ENCODE measurements at regions of chr6 and their contacts with region 1.

Region 1: GRCh38 chr6:37783856-37784584 is 35.5 kb upstream of the ZFAND3 start:
- DNase-seq: peak in 1 of 2 donors; percentile 58
- H3K4me3 ChIP-seq: peak overlapping the region; percentile 45 to 60
- H3K27ac ChIP-seq: peak overlapping the region; percentile 5 to 6
- H3K4me1 ChIP-seq: peaks cover 0 to 18% (median 17%) of the 10 kb centered on the region in 4 donors
- H3K27me3 ChIP-seq: no peaks in the 10 kb centered on the region
- CTCF ChIP-seq: no peak

Region 2: GRCh38 chr6:37602346-37602745 is 181.7 kb before region 1 on chr6:
- intact Hi-C with region 1: no loop called
- DNase-seq: no peak
- H3K4me3 ChIP-seq: no peak overlapping the region
- H3K27ac ChIP-seq: no peak overlapping the region
- H3K4me1 ChIP-seq: no peaks in the 10 kb centered on the region
- H3K27me3 ChIP-seq: peaks cover 0 to 8% of the 10 kb centered on the region in 2 donors
- CTCF ChIP-seq: no peak

Region 3: DNA sequence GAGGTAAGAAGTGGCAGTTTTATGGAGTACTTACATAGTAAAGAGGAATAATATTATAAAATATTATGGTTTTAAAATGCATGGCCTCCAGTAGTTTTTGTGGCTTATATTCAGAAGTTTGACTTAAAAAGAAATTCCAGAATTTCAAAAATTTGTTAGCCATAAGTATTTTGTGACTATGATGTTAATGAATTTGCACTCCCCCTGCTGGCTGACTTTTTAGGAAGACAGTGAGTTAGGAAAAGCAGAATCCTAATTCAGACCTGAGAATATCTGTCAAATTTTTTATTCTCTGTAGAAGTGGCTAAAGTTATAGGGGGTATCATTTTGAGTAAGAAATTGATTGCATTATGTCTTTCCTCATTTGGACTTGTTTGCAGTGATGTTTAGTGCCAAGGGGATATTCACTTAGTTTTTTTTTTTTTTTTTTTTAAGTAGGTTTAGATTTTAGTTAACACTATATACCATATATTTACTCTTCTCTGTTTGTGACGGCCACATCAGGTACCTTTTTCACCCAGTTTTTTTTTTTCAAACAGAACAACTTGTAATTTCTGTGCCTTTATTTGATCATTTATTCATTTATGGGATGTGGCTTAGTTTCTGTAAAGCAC is 76.3 kb after region 1 on chr6:
- intact Hi-C with region 1: loop called (anchors 10 kb)
- DNase-seq: peak in 1 of 2 donors; percentile 47
- H3K4me3 ChIP-seq: no peak overlapping the region
- H3K27ac ChIP-seq: no peak overlapping the region
- H3K4me1 ChIP-seq: peaks cover 0 to 45% (median 15%) of the 10 kb centered on the region in 4 donors
- H3K27me3 ChIP-seq: no peaks in the 10 kb centered on the region
- CTCF ChIP-seq: peak; percentile 46 to 47